ENCODE measurements at regions of chr6 and their contacts with region 1.

Region 1: DNA sequence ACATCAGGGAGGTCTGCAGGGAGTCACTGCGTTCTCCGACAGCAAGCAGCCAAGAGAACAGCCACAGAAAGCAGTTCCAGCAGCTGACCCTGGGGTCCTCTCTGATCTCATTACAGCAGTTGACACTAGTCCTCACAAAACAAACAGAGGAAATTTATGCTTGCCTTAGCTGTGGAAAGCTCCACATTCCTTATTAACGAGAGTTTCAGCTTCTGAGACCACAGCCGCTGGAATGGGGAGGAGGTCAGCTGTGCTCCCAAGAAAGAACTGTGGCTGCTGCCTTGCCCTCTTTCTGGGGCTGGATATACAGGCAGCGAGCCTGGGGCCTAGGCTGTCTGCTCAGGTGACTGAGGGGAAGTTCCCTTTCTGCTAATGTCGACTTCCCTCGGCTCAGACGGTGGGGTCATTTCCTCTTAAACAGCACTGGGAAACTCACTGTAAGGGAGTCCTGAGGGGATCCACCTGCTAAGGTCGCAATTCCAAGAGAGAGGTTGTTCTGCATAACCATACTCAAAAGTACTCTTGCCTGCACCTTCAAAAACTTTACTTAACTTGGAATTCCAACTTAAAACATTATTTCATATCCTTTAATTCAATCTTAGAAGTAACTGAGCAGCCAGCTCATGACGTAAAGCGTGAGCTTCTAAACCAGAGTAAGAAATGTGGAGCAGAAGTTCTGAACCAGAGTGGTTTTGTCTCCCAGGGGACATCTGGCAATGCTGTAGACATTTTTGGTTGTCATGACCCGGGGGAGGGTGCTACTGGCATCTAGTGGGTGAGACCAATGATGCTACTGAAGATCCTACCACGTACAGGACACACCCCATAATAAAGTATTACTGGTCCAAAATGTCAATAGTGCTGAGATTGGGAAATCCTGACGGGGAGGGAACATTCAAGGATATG is 80.3 kb downstream of the BACH2 start:
- DNase-seq: no peak
- ATAC-seq: no peak

Region 2: GRCh38 chr6:89927791-89928550 is 288.4 kb before region 1 on chr6:
- intact Hi-C with region 1: no loop called
- DNase-seq: no peak
- ATAC-seq: no peak

Region 3: GRCh38 chr6:90285611-90286381 is 69.5 kb after region 1 on chr6:
- intact Hi-C with region 1: loop called (anchors 1 kb)
- DNase-seq: peak; percentile 91
- ATAC-seq: peak; percentile 100

Measured in Right ventricle myocardium inferior (tissue), 1 donor.